Heart right ventricle (tissue), 16 donors: ENCODE measurements at regions of chr10 and their contacts with region 1.

Region 1: GRCh38 chr10:71893920-71894319 is 42.9 kb upstream of the PSAP start:
- DNase-seq: no peak
- ATAC-seq: no peak
- H3K4me3 ChIP-seq: no peak overlapping the region
- H3K27ac ChIP-seq: no peak overlapping the region
- H3K4me1 ChIP-seq: peaks cover 0 to 49% (median 8%) of the 10 kb centered on the region in 9 donors
- H3K27me3 ChIP-seq: no peaks in the 10 kb centered on the region
- CTCF ChIP-seq: no peak

Region 2: DNA sequence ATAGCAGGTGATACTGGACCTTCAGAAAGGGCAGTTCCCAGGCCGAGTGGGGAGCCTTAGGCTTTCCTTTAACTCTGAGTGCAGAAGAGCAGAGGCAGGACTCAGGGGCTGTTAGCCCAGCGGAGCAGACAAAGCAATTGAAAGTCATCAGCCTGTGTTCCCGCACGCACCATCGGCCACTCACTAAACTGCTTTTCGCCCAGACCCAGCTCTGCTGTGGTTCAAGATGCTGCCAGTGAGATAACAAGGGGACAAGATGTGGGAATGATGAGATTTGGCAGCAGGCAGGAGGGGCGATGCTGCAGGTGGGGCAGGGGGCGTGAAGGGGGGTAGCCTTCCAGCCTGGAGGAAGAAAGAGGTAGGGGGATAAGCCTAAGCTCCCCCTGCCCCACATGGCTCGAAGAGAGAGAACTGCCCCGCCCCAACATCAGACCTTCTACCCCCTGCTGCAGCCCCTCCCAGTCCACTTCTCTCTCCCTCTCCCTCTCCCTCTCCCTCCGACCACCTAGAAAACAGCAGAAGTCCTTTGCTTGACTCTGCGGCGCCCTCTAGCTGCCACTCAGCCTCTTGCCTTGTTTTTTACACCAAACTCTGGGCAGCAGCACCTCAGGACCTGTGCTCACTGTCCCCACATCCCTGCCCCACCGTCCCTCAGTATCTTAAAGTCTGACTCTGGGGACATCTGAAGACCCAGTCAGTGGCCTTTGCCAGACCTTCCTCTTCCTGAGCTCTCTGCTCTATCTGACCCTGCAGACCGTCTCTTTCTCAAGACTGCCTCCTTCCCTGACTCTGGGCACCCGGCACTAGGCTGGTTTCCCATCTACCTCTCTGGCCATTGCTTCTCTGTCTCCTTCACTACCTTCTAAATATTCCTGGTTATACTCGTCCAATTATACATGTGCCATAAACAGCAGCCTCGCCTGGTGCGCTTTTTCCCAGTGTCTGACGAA is 284.8 kb before region 1 on chr10:
- intact Hi-C with region 1: no loop called
- DNase-seq: peak; percentile 82
- ATAC-seq: peak in 6 of 8 donors; percentile 19 to 61 (median 51)
- H3K4me3 ChIP-seq: no peak overlapping the region
- H3K27ac ChIP-seq: no peak overlapping the region
- H3K4me1 ChIP-seq: peaks cover 8 to 26% (median 16%) of the 10 kb centered on the region in 9 donors
- H3K27me3 ChIP-seq: no peaks in the 10 kb centered on the region
- CTCF ChIP-seq: peak; percentile 69 to 83 (median 82)

Region 3: DNA sequence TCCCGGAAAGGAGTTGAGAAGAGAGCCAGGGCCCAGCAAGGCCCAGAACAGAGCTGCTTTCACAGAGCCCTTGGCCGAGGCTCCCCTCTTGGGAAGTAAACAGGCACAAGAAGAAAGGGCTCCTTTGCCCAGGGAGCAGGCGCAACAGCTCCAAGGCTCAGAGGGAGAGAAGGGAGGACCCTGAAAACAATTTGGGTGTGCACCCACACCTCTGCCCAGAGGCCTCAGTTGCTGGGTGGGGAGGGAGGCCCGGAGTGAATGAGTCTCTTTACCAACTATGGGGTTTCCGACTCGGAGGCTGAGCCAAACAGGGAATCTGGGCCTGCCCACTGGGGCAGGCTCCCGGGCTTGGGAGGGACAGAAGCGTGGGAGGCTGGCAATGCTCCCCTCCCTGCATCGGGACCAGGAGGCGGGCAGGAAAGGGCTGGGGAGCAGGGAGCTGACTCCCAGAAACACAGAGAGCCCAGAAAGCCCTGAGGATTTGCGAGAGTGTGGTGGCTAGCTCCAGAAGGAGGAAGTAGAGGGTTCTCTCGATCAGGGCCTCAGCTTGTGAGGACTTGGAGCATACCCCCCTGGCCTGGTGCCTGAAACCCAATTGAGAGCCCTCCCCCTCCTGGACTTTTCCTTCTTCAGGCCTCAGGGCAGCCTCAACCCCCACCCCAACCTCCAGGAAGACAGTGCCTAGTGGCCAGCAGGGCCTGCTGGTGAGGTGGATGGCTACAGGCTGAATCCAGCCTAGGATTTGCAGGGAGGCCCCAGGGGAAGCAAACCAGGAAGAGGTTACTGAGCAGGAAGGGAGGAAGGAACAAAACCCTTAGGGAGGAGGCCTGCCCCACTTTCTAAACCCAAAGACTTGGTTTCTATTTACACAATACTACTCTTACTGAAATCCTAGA is 180.5 kb before region 1 on chr10:
- intact Hi-C with region 1: loop called in 1 of 10 experiments (anchors 10 kb)
- DNase-seq: peak; percentile 85 to 88
- ATAC-seq: peak; percentile 78 to 90 (median 84)
- H3K4me3 ChIP-seq: peak overlapping the region in 4 of 10 donors; percentile 9 to 32 (median 16)
- H3K27ac ChIP-seq: peak overlapping the region; percentile 47 to 92 (median 89)
- H3K4me1 ChIP-seq: peaks cover 26 to 70% (median 62%) of the 10 kb centered on the region in 9 donors
- H3K27me3 ChIP-seq: no peaks in the 10 kb centered on the region
- CTCF ChIP-seq: peak in 4 of 9 donors; percentile 9 to 35 (median 20)

Region 4: DNA sequence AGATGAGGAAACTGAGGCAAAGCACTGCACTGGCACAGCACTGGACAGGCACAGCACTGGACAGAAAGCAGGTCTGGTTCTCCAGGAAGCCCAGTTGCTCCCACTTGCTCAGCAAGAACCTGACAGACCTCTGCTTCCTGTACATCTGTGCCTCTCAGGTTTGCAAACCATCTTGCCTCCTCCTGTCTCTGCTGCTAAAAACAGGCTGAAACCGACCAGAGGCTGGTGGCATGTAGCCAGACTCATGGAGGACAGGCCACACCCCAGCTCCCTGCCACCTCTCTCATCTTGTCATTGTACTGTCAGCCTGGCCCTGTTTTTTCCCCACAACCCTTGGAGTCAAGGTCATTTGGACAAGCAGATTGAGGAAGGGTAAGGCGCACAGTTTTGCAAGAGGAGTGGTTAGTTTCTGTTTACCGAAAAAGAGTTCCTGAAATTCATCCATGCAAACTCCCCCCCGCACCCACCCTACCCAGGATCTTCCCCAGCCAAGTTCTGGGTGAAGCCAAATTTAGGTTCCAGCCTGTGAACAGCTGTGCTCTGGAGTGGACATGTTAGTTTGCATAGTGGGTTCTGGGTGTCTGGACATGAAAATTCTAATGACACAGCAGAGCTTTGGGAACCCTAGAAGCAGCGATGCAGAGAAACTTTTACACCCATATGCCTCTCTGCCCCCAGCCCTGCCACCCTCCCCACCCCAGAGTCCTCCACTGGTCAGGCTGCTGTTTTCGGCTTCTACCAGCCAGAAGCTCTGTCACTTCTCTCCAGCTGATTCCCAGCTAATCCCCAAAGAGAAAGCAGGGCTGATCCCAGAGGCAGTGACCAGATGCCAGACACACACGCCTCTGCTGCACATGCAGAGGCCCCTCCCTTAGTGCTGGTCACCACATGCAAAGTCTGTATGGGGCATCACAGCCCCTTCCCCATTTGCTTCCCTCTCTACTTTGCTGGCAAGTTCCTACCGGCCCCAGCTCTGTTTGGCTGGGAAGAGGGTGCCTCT is 165.9 kb before region 1 on chr10:
- intact Hi-C with region 1: no loop called
- DNase-seq: peak; percentile 64 to 79
- ATAC-seq: peak; percentile 56 to 83 (median 72)
- H3K4me3 ChIP-seq: peak overlapping the region in 2 of 10 donors; percentile 2 to 11
- H3K27ac ChIP-seq: peak overlapping the region; percentile 39 to 93 (median 77)
- H3K4me1 ChIP-seq: peaks cover 13 to 59% (median 44%) of the 10 kb centered on the region in 9 donors
- H3K27me3 ChIP-seq: no peaks in the 10 kb centered on the region
- CTCF ChIP-seq: no peak

Region 5: DNA sequence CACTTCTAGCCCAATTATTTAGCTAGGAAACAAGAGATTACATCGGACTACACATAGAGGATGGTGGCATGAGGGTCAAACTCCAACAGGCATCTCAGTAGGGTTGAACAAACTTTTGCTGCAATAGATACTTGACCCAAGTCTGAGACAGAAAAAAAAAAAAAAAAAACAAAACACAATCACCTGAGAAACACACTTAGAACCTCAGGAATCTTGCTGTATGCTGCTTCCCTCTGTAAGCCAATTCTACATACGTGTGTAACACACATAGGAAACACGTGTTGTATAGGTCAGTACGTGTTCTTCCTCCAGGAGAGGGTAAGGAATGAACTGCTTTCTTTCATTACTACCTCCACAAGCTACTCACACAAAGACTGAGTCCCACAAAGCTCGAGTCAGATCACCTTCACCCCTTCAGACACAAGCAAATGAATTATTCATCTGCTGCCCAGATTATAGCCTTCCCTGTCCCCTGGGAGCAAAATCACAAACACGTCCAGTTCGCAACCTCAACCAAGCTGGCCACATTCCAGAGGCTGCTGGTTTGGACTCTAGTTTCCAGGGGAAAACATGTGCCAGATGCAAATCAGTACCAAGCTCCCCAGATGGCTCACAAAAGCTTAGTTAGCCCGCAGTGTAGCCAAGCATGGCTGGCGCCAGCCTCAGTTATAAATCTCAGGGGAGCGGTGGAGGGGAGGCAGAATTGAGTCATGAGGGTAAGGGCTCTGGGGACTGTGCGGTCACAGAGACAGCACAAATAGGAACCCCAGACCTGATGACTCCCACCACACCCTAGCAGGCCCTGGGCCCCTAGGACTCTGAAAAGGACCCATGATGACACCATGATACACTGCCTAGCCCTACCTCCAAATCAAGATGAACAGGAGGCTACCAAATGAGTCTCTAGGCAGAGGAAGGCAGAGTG is 58.0 kb before region 1 on chr10:
- intact Hi-C with region 1: loop called in 8 of 10 experiments (anchors 5 to 10 kb)
- DNase-seq: peak; percentile 69 to 72
- ATAC-seq: peak; percentile 34 to 70 (median 56)
- H3K4me3 ChIP-seq: peak overlapping the region in 1 of 10 donors; percentile 10
- H3K27ac ChIP-seq: peak overlapping the region; percentile 23 to 90 (median 83)
- H3K4me1 ChIP-seq: peaks cover 36 to 100% (median 85%) of the 10 kb centered on the region in 9 donors
- H3K27me3 ChIP-seq: no peaks in the 10 kb centered on the region
- CTCF ChIP-seq: no peak

Region 6: GRCh38 chr10:71850637-71851464 is 43.1 kb before region 1 on chr10 and contains the start of gene PSAP:
- intact Hi-C with region 1: loop called in 1 of 10 experiments (anchors 2 kb)
- DNase-seq: peak; percentile 99 to 100
- ATAC-seq: peak; percentile 98 to 99 (median 99)
- H3K4me3 ChIP-seq: peak within 1 kb of the TSS; percentile 85 to 100 (median 94)
- H3K27ac ChIP-seq: peak within 1 kb of the TSS; percentile 89 to 99 (median 98)
- H3K4me1 ChIP-seq: peaks cover 7 to 61% (median 47%) of the 10 kb centered on the region in 9 donors
- H3K27me3 ChIP-seq: no peaks in the 10 kb centered on the region
- CTCF ChIP-seq: no peak
- total RNA-seq, gene PSAP: 1,446 to 2,078 (median 1,666) TPM

Region 7: DNA sequence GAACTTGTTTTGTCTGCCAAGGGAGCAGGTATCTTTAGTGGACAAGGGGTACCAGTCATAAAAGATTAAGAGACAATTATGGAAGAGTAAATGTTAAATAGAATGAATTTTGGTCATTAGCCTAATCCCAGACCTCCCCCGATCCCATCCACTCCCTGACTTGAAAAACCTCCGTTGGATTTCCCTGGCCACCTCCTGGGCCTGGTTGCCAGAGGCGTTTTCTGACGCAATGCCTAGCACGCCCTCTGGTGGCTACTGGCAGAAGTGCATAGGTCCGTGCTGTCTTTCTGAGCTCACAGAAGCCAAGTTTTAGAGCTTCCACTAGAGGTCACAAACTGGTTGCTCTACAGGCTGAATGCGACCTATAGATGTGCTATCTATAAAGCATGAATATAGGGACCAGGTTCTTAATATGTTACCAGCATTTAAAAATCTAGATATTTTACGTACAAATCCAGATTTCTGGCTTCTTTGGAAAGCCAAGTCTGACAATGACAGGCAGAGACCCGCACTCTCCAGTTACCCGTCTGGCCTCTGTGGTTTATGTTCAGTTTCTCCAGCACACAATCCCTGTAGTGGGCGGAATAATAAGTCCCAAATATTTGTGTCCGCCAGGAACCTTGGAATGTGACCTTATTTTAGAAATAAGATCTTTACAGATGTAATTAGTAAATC is 154.7 kb after region 1 on chr10:
- intact Hi-C with region 1: loop called in 7 of 10 experiments (anchors 1 to 5 kb)
- DNase-seq: peak; percentile 94
- ATAC-seq: peak; percentile 58 to 91 (median 84)
- H3K4me3 ChIP-seq: no peak overlapping the region
- H3K27ac ChIP-seq: no peak overlapping the region
- H3K4me1 ChIP-seq: peaks cover 0 to 25% (median 10%) of the 10 kb centered on the region in 9 donors
- H3K27me3 ChIP-seq: no peaks in the 10 kb centered on the region
- CTCF ChIP-seq: peak; percentile 99 to 100 (median 100)

Region 8: GRCh38 chr10:72337020-72337629 is 443.2 kb after region 1 on chr10:
- intact Hi-C with region 1: loop called in 3 of 10 experiments (anchors 5 to 10 kb)
- DNase-seq: peak; percentile 88 to 90
- ATAC-seq: peak; percentile 30 to 51 (median 43)
- H3K4me3 ChIP-seq: no peak overlapping the region
- H3K27ac ChIP-seq: peak overlapping the region; percentile 46 to 97 (median 90)
- H3K4me1 ChIP-seq: peaks cover 34 to 70% (median 57%) of the 10 kb centered on the region in 9 donors
- H3K27me3 ChIP-seq: no peaks in the 10 kb centered on the region
- CTCF ChIP-seq: peak; percentile 95 to 99 (median 96)